ENCODE measurements at regions of chr4 and their contacts with region 1.

Region 1: DNA sequence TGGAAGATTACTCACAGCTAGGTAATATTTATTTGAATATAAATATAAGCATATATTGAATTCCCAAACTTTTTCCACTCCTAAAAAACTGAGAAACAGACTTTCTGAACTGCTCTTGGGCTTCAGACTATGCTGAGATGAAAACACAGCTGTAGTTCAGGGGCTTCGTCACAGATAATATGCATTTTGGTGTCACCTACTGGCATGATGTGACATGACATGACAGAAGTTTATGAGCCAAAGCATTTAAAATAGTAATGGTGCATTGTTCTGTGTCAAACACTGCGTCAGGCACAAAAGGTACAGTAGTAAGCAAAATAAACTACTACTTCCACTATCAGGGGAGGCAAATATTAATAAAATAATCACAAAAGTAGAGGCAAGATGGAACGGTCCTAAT is 171.3 kb downstream of the BTC start:
- DNase-seq: peak; percentile 68 to 85 (median 80)
- H3K4me3 ChIP-seq: no peak overlapping the region
- H3K27ac ChIP-seq: no peak overlapping the region
- H3K4me1 ChIP-seq: peaks cover 6 to 42% (median 17%) of the 10 kb centered on the region in 4 experiments
- H3K27me3 ChIP-seq: no peaks in the 10 kb centered on the region

Region 2: DNA sequence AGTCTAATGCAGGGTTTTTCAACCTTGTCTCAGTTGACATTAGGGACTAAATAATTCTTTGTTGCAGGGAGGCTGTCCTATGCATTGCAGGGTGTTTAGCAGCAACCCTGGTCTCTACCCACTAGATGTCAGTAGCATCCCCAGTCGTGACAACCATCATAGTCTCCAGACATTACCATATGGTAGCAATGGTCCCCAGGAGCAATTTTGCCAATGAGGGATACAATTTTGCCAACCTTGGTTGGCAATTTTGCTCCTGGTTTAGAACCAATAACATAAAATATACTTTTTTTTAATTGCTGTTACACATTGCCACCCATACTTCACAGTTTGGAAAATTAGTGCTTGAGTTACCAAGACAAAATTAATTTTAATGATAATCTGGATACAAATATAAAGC is 252.1 kb before region 1 on chr4:
- CTCF ChIA-PET with region 1: interaction called, 22 read pairs
- POLR2A ChIA-PET with region 1: no interaction called
- DNase-seq: peak; percentile 75 to 83 (median 78)
- H3K4me3 ChIP-seq: no peak overlapping the region
- H3K27ac ChIP-seq: peak overlapping the region in 1 of 2 experiments; percentile 38
- H3K4me1 ChIP-seq: peaks cover 0 to 62% (median 16%) of the 10 kb centered on the region in 4 experiments
- H3K27me3 ChIP-seq: no peaks in the 10 kb centered on the region

Measured in common myeloid progenitor, CD34-positive (primary cell).